ENCODE measurements at regions of chr6 and their contacts with region 1.

Region 1: DNA sequence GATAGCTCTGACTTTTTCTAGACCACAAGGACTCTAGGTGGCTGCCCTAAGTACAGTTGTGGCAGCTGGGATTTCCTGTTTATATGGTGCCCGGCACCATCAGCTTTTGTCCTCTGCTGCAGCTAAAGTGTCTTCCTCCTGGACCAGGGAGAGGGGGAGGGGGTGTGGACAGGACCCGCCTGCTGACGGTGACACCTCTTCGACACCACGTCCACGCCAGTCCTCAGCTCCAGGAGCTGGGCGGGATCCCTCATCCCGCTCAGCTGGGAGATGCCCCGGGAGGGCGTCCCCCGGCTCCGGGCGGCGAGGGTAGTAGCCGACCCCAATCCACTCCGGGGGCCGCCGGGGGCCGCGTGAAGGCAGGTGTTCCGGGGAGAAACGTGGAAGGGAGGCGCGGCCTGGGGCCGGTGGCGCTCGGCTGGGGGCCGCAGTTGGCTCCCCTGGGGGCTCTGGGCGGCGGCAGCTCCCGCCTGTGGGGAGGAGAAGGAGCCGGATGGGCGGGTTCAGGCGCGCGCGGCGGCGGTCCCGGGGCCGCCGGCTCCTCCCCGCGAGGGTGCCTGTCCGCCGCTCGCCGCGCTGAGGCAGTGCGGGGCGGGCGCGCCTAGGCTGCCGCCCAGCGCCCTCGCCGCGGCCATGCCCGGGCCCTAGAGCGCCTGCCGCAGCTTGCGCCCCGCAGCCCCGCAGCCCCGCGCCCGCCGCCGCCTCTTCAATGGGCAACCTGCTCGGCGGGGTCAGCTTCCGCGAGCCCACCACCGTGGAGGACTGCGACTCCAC is at the start of gene OGFRL1:
- DNase-seq: peak; percentile 36 to 88 (median 68)
- ATAC-seq: peak; percentile 85
- H3K4me3 ChIP-seq: peak within 1 kb of the TSS; percentile 70 to 74
- H3K4me3 Mint-ChIP-seq: peak within 1 kb of the TSS; percentile 79
- H3K27ac ChIP-seq: peak within 1 kb of the TSS; percentile 53 to 82
- H3K27ac Mint-ChIP-seq: peak within 1 kb of the TSS; percentile 84
- H3K4me1 ChIP-seq: peaks cover 24% of the 10 kb centered on the region
- H3K4me1 Mint-ChIP-seq: peaks cover 41% of the 10 kb centered on the region
- H3K27me3 ChIP-seq: no peaks in the 10 kb centered on the region
- H3K27me3 Mint-ChIP-seq: no peaks in the 10 kb centered on the region
- CTCF ChIP-seq: no peak
- total RNA-seq, gene OGFRL1: 9.6 to 10.0 TPM

Region 2: GRCh38 chr6:70413114-70413991 is 875.1 kb before region 1 on chr6 and contains the start of gene FAM135A:
- CTCF ChIA-PET with region 1: no interaction called
- POLR2A ChIA-PET with region 1: interaction called, 3 read pairs
- intact Hi-C with region 1: loop called in 1 of 2 experiments (anchors 2 kb)
- DNase-seq: peak; percentile 85 to 96 (median 93)
- ATAC-seq: peak; percentile 96
- H3K4me3 ChIP-seq: peak within 1 kb of the TSS; percentile 65 to 72
- H3K4me3 Mint-ChIP-seq: peak within 1 kb of the TSS; percentile 91
- H3K27ac ChIP-seq: peak within 1 kb of the TSS; percentile 47 to 63
- H3K27ac Mint-ChIP-seq: peak within 1 kb of the TSS; percentile 91
- H3K4me1 ChIP-seq: peaks cover 8% of the 10 kb centered on the region
- H3K4me1 Mint-ChIP-seq: peaks cover 24% of the 10 kb centered on the region
- H3K27me3 ChIP-seq: no peaks in the 10 kb centered on the region
- H3K27me3 Mint-ChIP-seq: no peaks in the 10 kb centered on the region
- CTCF ChIP-seq: no peak
- total RNA-seq, gene FAM135A: 5.8 to 6.5 TPM

Region 3: GRCh38 chr6:70667711-70668498 is 620.5 kb before region 1 on chr6 and contains the start of gene SMAP1:
- CTCF ChIA-PET with region 1: no interaction called
- POLR2A ChIA-PET with region 1: interaction called, 5 read pairs
- intact Hi-C with region 1: loop called (anchors 5 to 10 kb)
- DNase-seq: peak; percentile 79 to 97 (median 93)
- ATAC-seq: peak; percentile 91
- H3K4me3 ChIP-seq: peak within 1 kb of the TSS; percentile 76 to 87
- H3K4me3 Mint-ChIP-seq: peak within 1 kb of the TSS; percentile 90
- H3K27ac ChIP-seq: peak within 1 kb of the TSS; percentile 53 to 75
- H3K27ac Mint-ChIP-seq: peak within 1 kb of the TSS; percentile 92
- H3K4me1 ChIP-seq: peaks cover 39% of the 10 kb centered on the region
- H3K4me1 Mint-ChIP-seq: peaks cover 53% of the 10 kb centered on the region
- H3K27me3 ChIP-seq: no peaks in the 10 kb centered on the region
- H3K27me3 Mint-ChIP-seq: no peaks in the 10 kb centered on the region
- CTCF ChIP-seq: no peak
- total RNA-seq, gene SMAP1: 21.2 to 21.8 TPM

Region 4: DNA sequence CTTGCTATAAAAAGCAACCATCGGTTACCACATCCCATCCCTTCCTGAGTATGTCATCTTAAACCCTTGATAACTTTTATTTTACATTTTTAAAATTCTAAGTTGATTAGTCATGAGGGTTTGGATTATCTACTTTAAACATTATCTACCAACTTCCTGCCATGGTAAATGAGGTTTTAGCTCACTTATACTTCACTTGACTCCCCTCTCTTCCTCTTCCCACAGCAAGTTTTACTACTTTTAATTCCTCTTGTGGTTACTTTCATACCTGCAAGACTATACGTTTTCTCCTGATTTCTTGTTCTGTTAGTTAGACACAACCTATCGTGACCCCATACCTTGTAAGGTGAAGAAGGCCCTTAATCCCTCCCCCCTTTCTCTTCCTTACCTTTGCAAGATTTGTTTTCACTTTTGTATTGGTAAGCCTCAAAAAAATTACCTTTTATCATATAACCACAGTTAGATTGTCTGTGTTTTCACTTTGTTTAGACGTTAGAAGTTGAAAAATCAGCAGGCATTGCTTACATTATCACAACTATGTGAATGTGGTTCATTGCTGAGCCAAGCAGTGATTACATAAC is 59.9 kb before region 1 on chr6:
- CTCF ChIA-PET with region 1: no interaction called
- POLR2A ChIA-PET with region 1: interaction called, 5 read pairs
- intact Hi-C with region 1: loop called (anchors 5 kb)
- DNase-seq: peak in 2 of 9 experiments; percentile 48 to 65
- ATAC-seq: peak; percentile 86
- H3K4me3 ChIP-seq: no peak overlapping the region
- H3K4me3 Mint-ChIP-seq: peak overlapping the region; percentile 42
- H3K27ac ChIP-seq: peak overlapping the region in 1 of 2 experiments; percentile 41
- H3K27ac Mint-ChIP-seq: peak overlapping the region; percentile 78
- H3K4me1 ChIP-seq: peaks cover 15% of the 10 kb centered on the region
- H3K4me1 Mint-ChIP-seq: peaks cover 30% of the 10 kb centered on the region
- H3K27me3 ChIP-seq: no peaks in the 10 kb centered on the region
- H3K27me3 Mint-ChIP-seq: no peaks in the 10 kb centered on the region
- CTCF ChIP-seq: no peak

Region 5: GRCh38 chr6:71299541-71300470 is 11.4 kb after region 1 on chr6:
- CTCF ChIA-PET with region 1: interaction called, 3 read pairs
- POLR2A ChIA-PET with region 1: interaction called, 14 read pairs
- intact Hi-C with region 1: no loop called
- DNase-seq: no peak
- ATAC-seq: no peak
- H3K4me3 ChIP-seq: no peak overlapping the region
- H3K4me3 Mint-ChIP-seq: no peak overlapping the region
- H3K27ac ChIP-seq: no peak overlapping the region
- H3K27ac Mint-ChIP-seq: no peak overlapping the region
- H3K4me1 ChIP-seq: no peaks in the 10 kb centered on the region
- H3K4me1 Mint-ChIP-seq: no peaks in the 10 kb centered on the region
- H3K27me3 ChIP-seq: no peaks in the 10 kb centered on the region
- H3K27me3 Mint-ChIP-seq: no peaks in the 10 kb centered on the region
- CTCF ChIP-seq: no peak

Region 6: DNA sequence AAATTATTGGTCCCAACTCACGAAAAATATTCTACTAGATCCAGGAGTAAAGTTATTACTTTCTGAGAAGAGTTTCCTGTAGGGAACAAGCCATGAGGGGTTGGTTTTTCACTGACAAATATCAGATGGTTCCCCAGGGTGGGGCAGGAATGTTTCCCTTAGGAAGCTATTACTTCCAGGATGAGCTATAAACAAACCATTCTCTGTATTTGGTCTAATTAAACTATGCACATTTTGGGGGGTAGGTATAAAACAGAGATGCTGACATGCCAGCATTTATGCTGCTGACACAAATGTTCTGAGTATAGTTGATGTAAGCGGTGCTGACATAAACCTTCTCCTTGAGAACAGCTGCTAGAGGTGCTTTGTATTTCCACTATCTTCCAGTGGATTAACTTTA is 54.4 kb after region 1 on chr6:
- CTCF ChIA-PET with region 1: no interaction called
- POLR2A ChIA-PET with region 1: no interaction called
- intact Hi-C with region 1: no loop called
- DNase-seq: no peak
- ATAC-seq: no peak
- H3K4me3 ChIP-seq: no peak overlapping the region
- H3K4me3 Mint-ChIP-seq: no peak overlapping the region
- H3K27ac ChIP-seq: no peak overlapping the region
- H3K27ac Mint-ChIP-seq: no peak overlapping the region
- H3K4me1 ChIP-seq: no peaks in the 10 kb centered on the region
- H3K4me1 Mint-ChIP-seq: no peaks in the 10 kb centered on the region
- H3K27me3 ChIP-seq: no peaks in the 10 kb centered on the region
- H3K27me3 Mint-ChIP-seq: no peaks in the 10 kb centered on the region
- CTCF ChIP-seq: no peak

Region 7: GRCh38 chr6:72064399-72064975 is 776.1 kb after region 1 on chr6:
- CTCF ChIA-PET with region 1: no interaction called
- POLR2A ChIA-PET with region 1: no interaction called
- intact Hi-C with region 1: no loop called
- DNase-seq: no peak
- ATAC-seq: no peak
- H3K4me3 ChIP-seq: no peak overlapping the region
- H3K4me3 Mint-ChIP-seq: no peak overlapping the region
- H3K27ac ChIP-seq: no peak overlapping the region
- H3K27ac Mint-ChIP-seq: no peak overlapping the region
- H3K4me1 ChIP-seq: no peaks in the 10 kb centered on the region
- H3K4me1 Mint-ChIP-seq: no peaks in the 10 kb centered on the region
- H3K27me3 ChIP-seq: no peaks in the 10 kb centered on the region
- H3K27me3 Mint-ChIP-seq: no peaks in the 10 kb centered on the region
- CTCF ChIP-seq: no peak